ENCODE measurements at regions of chr10 and their contacts with region 1.

Region 1: DNA sequence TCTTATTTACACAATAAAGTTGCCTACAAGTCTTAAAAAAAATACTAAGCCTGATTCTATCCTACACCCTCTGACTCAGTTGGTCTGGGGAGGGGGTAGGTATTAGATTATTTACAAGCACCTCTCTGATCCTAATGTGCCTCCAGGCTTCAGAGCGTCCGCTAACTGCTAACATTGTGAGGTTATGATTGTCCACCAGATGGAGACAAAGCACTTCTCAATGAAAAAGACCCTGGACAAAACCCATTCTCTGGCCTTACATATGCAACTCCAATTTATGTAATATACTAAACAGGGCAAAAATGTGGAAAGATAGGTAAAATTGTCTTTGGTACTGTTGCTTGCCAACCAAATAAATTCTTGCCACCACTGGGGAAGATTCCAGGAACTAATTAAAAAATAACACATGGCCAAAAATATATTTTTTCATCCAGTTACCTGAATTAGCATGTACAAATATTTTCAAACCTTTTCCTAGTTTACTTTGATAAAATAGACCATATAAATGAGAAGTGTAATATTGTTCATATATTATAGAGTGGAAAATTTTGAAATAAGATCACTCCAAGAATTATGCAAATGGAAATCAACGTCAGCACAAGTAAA is 92.4 kb downstream of the KIF20B start:
- DNase-seq: peak; percentile 26
- H3K4me3 Mint-ChIP-seq: no peak overlapping the region
- H3K27ac Mint-ChIP-seq: no peak overlapping the region
- H3K4me1 Mint-ChIP-seq: no peaks in the 10 kb centered on the region
- H3K27me3 Mint-ChIP-seq: peaks cover 5% of the 10 kb centered on the region

Region 2: GRCh38 chr10:89494575-89494974 is 299.2 kb before region 1 on chr10:
- CTCF ChIA-PET with region 1: no interaction called
- POLR2A ChIA-PET with region 1: no interaction called
- intact Hi-C with region 1: no loop called
- DNase-seq: no peak
- H3K4me3 Mint-ChIP-seq: no peak overlapping the region
- H3K27ac Mint-ChIP-seq: no peak overlapping the region
- H3K4me1 Mint-ChIP-seq: no peaks in the 10 kb centered on the region
- H3K27me3 Mint-ChIP-seq: peaks cover 7% of the 10 kb centered on the region

Region 3: GRCh38 chr10:89954787-89955566 is 161.2 kb after region 1 on chr10:
- CTCF ChIA-PET with region 1: no interaction called
- POLR2A ChIA-PET with region 1: no interaction called
- intact Hi-C with region 1: loop called (anchors 5 kb)
- DNase-seq: peak; percentile 20
- H3K4me3 Mint-ChIP-seq: no peak overlapping the region
- H3K27ac Mint-ChIP-seq: no peak overlapping the region
- H3K4me1 Mint-ChIP-seq: no peaks in the 10 kb centered on the region
- H3K27me3 Mint-ChIP-seq: peaks cover 3% of the 10 kb centered on the region

Region 4: DNA sequence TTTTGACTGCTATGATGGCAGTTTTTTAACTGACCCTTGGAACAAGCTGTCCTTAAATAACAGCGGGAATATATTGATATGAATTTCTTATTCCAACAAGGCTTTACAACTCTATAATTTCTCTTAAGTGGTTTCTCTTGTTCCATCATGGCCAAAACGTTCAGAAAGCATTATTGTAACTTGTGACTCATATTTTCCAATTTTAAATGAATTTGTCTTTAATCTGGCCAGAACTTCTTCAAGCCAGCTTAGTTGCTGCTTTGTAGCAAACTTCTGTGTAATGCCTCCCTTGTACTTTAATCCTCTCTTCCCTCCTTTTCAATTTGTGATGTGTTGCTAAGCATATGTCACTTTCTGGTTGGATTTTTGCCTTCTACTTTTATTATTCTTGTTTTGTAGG is 179.6 kb after region 1 on chr10:
- CTCF ChIA-PET with region 1: no interaction called
- POLR2A ChIA-PET with region 1: no interaction called
- intact Hi-C with region 1: no loop called
- DNase-seq: no peak
- H3K4me3 Mint-ChIP-seq: no peak overlapping the region
- H3K27ac Mint-ChIP-seq: no peak overlapping the region
- H3K4me1 Mint-ChIP-seq: peaks cover 5% of the 10 kb centered on the region
- H3K27me3 Mint-ChIP-seq: peaks cover 1% of the 10 kb centered on the region

Region 5: GRCh38 chr10:90138844-90139243 is 345.1 kb after region 1 on chr10:
- CTCF ChIA-PET with region 1: no interaction called
- POLR2A ChIA-PET with region 1: no interaction called
- intact Hi-C with region 1: loop called (anchors 2 kb)
- DNase-seq: no peak
- H3K4me3 Mint-ChIP-seq: no peak overlapping the region
- H3K27ac Mint-ChIP-seq: no peak overlapping the region
- H3K4me1 Mint-ChIP-seq: no peaks in the 10 kb centered on the region
- H3K27me3 Mint-ChIP-seq: no peaks in the 10 kb centered on the region

Region 6: DNA sequence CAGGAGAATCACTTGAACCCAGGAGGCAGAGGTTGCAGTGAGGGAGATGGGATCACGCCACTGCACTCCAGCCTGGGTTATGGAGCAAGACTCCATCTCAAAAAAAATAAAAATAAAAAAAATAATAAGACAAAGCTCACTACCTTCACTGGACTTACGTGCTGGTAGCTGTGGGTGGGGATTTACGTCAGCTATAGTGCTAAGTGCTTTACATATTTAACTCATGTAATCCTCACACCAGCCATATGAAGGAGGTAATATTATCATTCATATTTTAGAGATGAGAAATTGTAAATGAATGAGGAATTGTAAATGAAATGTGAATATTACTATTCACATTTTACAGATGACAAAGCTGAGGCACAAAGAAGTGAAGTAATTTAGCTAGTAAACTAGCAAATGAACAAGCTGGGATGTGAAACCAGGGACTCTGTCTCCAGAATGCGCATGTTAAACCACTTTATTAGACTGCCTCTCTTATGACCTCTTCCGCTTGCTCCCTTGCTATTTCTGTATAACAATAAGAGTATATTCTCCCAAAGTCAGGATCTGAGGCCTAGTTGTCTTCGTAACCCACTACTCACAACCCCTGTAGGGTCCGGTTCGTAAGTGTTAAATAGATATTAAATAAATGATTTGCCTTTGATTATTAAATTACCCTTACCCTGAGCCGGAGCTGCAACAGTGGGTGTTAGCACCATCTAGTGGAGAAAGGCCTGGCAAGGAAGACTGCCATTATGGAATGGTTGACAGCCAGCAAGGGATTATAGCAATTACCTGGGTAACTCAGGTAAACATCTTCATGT is 993.8 kb after region 1 on chr10:
- CTCF ChIA-PET with region 1: interaction called, 8 read pairs
- POLR2A ChIA-PET with region 1: no interaction called
- intact Hi-C with region 1: loop called (anchors 2 kb)
- DNase-seq: peak; percentile 29
- H3K4me3 Mint-ChIP-seq: no peak overlapping the region
- H3K27ac Mint-ChIP-seq: no peak overlapping the region
- H3K4me1 Mint-ChIP-seq: no peaks in the 10 kb centered on the region
- H3K27me3 Mint-ChIP-seq: peaks cover 9% of the 10 kb centered on the region

Region 7: GRCh38 chr10:90862908-90863514 is 1069.3 kb after region 1 on chr10:
- CTCF ChIA-PET with region 1: no interaction called
- POLR2A ChIA-PET with region 1: no interaction called
- intact Hi-C with region 1: loop called (anchors 1 kb)
- DNase-seq: no peak
- H3K4me3 Mint-ChIP-seq: no peak overlapping the region
- H3K27ac Mint-ChIP-seq: no peak overlapping the region
- H3K4me1 Mint-ChIP-seq: peaks cover 10% of the 10 kb centered on the region
- H3K27me3 Mint-ChIP-seq: peaks cover 33% of the 10 kb centered on the region

Measured in activated CD4-positive, alpha-beta memory T cell treated with anti-CD3 and anti-CD28 coated beads for 36 hours (primary cell).